CD14-positive monocyte (primary cell): ENCODE measurements at regions of chr17 and their contacts with region 1.

Region 1: DNA sequence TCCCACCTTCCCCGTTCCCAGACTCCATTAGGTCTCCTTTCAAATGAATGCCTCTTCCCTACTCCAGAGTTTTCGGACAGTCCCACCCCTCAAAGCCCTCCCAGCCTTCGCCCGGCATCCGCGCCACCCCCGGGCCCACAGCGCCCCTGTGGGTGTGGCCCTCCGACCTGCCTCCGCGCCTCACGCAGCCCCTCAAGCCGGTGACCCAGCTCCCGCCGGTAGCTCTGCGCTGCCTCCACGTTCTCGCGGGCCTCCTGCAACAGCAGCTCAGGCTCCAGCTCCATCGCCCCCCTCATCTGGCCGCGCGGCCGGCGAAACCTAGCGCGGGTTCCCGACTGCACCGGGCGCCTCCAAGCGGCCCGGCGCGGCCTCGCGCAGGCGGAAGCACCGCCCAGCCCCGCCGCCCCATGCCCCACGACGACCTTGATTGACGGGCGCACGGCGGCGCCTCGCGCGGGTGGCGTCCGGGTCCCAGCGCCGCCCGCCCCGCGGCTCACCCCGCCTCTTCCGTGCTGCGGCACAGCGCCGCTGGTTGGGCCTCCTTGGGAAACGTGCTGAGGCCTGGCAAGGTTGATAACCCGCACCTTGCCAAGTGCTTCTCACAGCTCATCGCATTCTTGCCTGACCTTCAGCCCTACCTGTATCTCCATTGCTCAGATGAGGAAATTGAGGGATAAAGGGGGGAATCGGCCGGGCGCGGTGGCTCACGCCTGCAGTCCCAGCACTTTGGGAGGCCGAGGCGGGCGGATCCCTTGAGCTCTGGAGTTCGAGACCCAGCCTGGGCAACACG is at the start of gene CRLF3:
- DNase-seq: peak; percentile 81 to 85 (median 84)
- H3K4me3 ChIP-seq: peak within 1 kb of the TSS; percentile 85 to 96 (median 94)
- H3K4me3 Mint-ChIP-seq: peak within 1 kb of the TSS; percentile 98
- H3K27ac ChIP-seq: peak within 1 kb of the TSS; percentile 47 to 87
- H3K27ac Mint-ChIP-seq: peak within 1 kb of the TSS; percentile 82 to 97 (median 89)
- H3K4me1 ChIP-seq: peaks cover 36 to 44% of the 10 kb centered on the region in 2 donors
- H3K4me1 Mint-ChIP-seq: peaks cover 39% of the 10 kb centered on the region
- H3K27me3 ChIP-seq: no peaks in the 10 kb centered on the region
- H3K27me3 Mint-ChIP-seq: peaks cover 0 to 1% (median 0%) of the 10 kb centered on the region in 3 donors
- CTCF ChIP-seq: peak; percentile 71
- polyA plus RNA-seq, gene CRLF3: 41.0 to 92.8 (median 88.5) TPM

Region 2: DNA sequence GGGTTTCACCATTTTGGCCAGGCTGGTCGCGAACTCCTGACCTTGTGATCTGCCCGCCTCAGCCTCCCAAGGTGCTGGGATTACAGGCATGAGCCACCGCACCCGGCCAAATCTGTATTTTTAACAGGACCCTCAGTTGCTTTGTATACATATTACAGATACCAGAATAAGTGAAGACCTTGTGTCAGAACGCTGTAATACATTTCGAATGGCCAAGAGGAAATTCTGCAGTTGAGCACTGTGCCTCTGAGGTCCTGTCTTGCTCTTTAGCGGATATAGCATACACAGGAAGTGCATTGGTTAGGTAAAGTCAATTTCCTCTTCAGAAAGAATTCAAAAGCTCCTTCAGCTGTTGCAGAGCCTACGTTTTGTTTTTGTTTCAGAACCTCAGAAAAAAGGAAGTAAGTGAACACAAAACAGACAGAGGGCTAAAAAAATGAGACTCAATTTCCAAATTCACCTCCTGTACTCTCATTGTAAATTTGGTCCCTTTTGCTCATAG is 15.7 kb before region 1 on chr17:
- intact Hi-C with region 1: loop called in 1 of 2 experiments (anchors 2 kb)
- DNase-seq: peak; percentile 66 to 88 (median 82)
- H3K4me3 ChIP-seq: peak overlapping the region in 2 of 3 experiments; percentile 10 to 63
- H3K4me3 Mint-ChIP-seq: peak overlapping the region; percentile 71 to 82
- H3K27ac ChIP-seq: peak overlapping the region; percentile 69 to 88
- H3K27ac Mint-ChIP-seq: peak overlapping the region; percentile 89 to 95 (median 92)
- H3K4me1 ChIP-seq: peaks cover 78 to 86% of the 10 kb centered on the region in 2 donors
- H3K4me1 Mint-ChIP-seq: peaks cover 65% of the 10 kb centered on the region
- H3K27me3 ChIP-seq: no peaks in the 10 kb centered on the region
- H3K27me3 Mint-ChIP-seq: peaks cover 0 to 1% (median 0%) of the 10 kb centered on the region in 3 donors
- CTCF ChIP-seq: no peak

Region 3: DNA sequence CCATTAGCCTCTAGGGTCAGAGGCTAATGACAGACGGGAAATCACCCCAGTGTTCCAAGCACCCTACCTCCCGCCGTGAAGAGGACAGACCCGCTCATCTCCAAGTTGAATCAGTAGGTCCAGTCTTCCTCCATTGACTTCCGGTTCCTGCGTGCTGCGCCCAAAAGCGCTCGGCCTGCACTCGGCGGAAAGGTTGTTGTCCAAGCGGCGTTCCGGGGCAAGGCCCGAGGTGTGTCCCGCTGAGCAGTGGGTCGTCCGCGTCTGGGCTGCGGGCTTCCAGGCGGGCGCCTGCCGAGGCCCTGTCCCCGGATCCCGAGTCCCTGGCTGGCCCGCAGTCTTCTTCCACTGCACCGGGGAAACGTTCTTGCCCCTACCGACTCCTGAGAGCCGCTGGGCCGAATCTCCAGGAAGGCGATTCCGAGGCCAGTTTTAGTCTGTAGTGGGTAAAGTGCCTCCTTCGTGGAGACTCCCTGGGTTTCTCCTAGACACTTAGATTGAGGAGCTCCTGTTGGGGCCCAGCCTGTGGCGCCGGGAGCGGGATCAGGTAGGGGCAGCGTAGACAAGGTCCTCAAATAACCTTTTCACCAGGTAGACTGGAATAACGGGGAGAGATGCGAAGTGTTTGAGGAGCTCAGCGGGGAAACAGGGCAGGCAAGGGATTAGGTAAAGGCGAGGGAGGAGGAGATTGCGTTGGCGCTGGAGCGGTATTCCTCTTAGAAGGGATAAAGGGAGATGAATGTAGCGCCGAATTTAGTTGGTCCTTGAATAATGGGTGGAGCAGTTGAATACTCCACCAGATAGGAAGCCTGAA is 81.8 kb after region 1 on chr17 and contains the start of gene TEFM:
- intact Hi-C with region 1: no loop called
- DNase-seq: peak; percentile 80 to 88 (median 87)
- H3K4me3 ChIP-seq: peak within 1 kb of the TSS; percentile 76 to 92 (median 91)
- H3K4me3 Mint-ChIP-seq: peak within 1 kb of the TSS; percentile 89 to 98
- H3K27ac ChIP-seq: peak within 1 kb of the TSS; percentile 74 to 93
- H3K27ac Mint-ChIP-seq: peak within 1 kb of the TSS; percentile 91 to 97 (median 93)
- H3K4me1 ChIP-seq: peaks cover 19 to 22% of the 10 kb centered on the region in 2 donors
- H3K4me1 Mint-ChIP-seq: peaks cover 27% of the 10 kb centered on the region
- H3K27me3 ChIP-seq: no peaks in the 10 kb centered on the region
- H3K27me3 Mint-ChIP-seq: peaks cover 0 to 3% (median 0%) of the 10 kb centered on the region in 3 donors
- CTCF ChIP-seq: no peak
- polyA plus RNA-seq, gene TEFM: 6.5 to 14.6 (median 10.0) TPM

Region 4: DNA sequence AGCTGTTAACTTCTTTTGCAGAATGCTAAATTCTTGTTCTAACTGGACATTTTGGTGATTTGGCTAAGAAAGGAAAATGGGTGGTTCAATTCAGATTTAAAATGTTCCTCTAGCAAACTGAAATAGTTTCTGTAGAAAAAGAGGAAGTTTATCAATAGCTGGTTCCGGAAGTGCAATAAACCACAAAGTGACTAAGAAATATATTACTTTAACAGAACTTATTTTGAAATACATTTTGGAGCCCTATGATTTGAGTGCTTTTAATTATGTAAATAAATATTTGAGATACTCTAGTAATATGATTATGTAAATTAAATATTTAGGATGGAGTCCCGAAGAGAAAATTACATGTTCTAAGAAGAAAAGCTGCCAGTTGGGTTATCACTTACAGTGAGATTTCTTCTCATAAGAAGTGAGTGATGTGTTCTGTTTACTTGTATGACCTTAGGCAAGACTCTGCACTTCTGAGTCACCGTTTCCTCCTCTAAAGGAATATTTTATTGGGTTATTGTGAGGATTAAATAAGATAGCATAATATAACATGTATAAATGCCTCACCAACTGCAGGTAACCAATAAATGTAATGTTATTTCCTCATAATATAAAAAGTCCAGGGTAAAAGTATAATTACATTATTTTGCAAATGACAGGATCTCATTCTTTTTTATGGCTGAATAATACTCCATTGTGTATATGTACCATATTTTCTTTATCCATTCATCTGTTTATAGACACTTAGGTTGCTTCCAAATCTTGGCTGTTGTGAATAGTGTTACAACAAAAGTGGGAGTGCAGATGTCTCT is 489.6 kb after region 1 on chr17 and contains the start of gene EVI2B:
- intact Hi-C with region 1: loop called in 1 of 2 experiments (anchors 10 kb)
- DNase-seq: peak; percentile 81 to 95 (median 92)
- H3K4me3 ChIP-seq: peak within 1 kb of the TSS; percentile 90 to 100 (median 96)
- H3K4me3 Mint-ChIP-seq: peak within 1 kb of the TSS; percentile 93 to 98
- H3K27ac ChIP-seq: peak within 1 kb of the TSS; percentile 86 to 93
- H3K27ac Mint-ChIP-seq: peak within 1 kb of the TSS; percentile 92 to 98 (median 97)
- H3K4me1 ChIP-seq: peaks cover 36 to 56% of the 10 kb centered on the region in 2 donors
- H3K4me1 Mint-ChIP-seq: peaks cover 41% of the 10 kb centered on the region
- H3K27me3 ChIP-seq: no peaks in the 10 kb centered on the region
- H3K27me3 Mint-ChIP-seq: no peaks in the 10 kb centered on the region
- CTCF ChIP-seq: no peak
- polyA plus RNA-seq, gene EVI2B: 166 to 267 (median 262) TPM